ENCODE measurements at regions of chr11 and their contacts with region 1.

Region 1: DNA sequence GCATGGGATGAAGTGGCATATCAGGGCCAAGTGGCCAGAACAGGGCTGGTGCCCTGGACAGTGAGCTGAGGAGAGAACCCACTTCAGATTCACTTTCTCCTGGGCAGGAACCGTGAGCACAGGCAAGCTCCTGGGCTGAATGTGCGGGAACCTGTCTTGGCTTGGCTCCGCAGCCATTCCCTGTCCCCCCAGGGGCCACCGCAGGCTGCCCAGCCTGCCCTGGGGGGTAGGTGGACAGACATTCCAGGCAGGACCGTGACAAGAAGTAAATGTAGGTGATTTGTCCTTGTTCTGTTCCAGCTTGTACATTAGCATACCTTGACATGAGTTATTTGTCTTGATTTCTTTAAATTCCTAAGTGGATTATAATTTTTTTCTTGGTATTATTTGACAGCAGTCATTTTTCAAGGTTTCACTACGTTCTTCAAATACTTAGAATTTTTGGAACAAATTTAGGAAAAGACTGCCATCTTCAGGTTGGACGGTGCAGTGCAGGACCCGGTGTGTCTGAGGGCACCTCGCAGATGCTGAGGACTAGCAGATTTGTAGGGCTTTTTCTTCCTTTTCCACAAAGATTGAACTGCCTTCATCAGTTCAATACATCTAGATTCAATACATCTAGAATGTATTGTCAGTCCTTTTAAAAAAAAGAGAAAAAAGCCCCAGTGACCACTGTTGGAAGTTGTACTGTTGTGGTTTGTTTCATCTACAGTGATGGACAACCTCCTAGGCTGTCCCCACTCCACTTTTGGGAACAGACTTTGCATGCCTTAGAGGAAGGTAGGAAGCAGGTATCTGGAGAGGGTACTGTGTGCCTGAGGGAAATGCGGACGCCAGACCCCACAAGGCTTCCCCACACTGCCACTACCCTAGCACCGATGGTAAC is 115.1 kb upstream of the RASSF10 start:
- DNase-seq: peak; percentile 18 to 34 (median 21)
- H3K4me3 ChIP-seq: no peak overlapping the region
- H3K4me3 Mint-ChIP-seq: no peak overlapping the region
- H3K27ac ChIP-seq: no peak overlapping the region
- H3K27ac Mint-ChIP-seq: no peak overlapping the region
- H3K4me1 ChIP-seq: peaks cover 13 to 15% of the 10 kb centered on the region in 2 donors
- H3K4me1 Mint-ChIP-seq: peaks cover 11% of the 10 kb centered on the region
- H3K27me3 ChIP-seq: peaks cover 0 to 2% of the 10 kb centered on the region in 2 donors
- H3K27me3 Mint-ChIP-seq: peaks cover 6 to 14% (median 7%) of the 10 kb centered on the region in 3 donors
- CTCF ChIP-seq: peak; percentile 79

Region 2: DNA sequence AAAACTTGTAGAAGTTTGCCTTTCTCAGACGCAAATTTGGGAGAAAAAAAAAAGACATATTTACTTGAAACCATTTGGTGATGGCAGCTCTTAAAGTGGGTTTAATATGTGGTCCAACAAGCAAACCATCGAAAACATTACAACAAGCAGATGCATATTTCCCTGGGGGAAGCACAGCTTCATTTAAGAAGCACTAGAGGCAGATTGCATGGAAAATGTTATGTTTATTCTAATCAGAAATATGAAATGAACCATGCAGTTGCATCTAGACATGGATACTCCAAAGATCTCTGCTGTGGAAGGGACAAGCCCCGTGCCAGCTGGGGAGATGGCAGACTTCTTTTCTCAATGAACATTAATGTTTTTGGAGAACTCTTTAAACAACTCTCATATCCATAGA is 574.0 kb before region 1 on chr11:
- intact Hi-C with region 1: loop called in 1 of 2 experiments (anchors 10 kb)
- DNase-seq: no peak
- H3K4me3 ChIP-seq: no peak overlapping the region
- H3K4me3 Mint-ChIP-seq: no peak overlapping the region
- H3K27ac ChIP-seq: no peak overlapping the region
- H3K27ac Mint-ChIP-seq: no peak overlapping the region
- H3K4me1 ChIP-seq: no peaks in the 10 kb centered on the region
- H3K4me1 Mint-ChIP-seq: no peaks in the 10 kb centered on the region
- H3K27me3 ChIP-seq: no peaks in the 10 kb centered on the region
- H3K27me3 Mint-ChIP-seq: peaks cover 0 to 8% (median 6%) of the 10 kb centered on the region in 3 donors
- CTCF ChIP-seq: no peak

Region 3: GRCh38 chr11:12331239-12331874 is 562.7 kb before region 1 on chr11:
- intact Hi-C with region 1: loop called (anchors 10 kb)
- DNase-seq: peak in 2 of 3 donors; percentile 16
- H3K4me3 ChIP-seq: no peak overlapping the region
- H3K4me3 Mint-ChIP-seq: no peak overlapping the region
- H3K27ac ChIP-seq: no peak overlapping the region
- H3K27ac Mint-ChIP-seq: no peak overlapping the region
- H3K4me1 ChIP-seq: no peaks in the 10 kb centered on the region
- H3K4me1 Mint-ChIP-seq: no peaks in the 10 kb centered on the region
- H3K27me3 ChIP-seq: no peaks in the 10 kb centered on the region
- H3K27me3 Mint-ChIP-seq: peaks cover 3 to 13% (median 6%) of the 10 kb centered on the region in 3 donors
- CTCF ChIP-seq: peak; percentile 63

Region 4: DNA sequence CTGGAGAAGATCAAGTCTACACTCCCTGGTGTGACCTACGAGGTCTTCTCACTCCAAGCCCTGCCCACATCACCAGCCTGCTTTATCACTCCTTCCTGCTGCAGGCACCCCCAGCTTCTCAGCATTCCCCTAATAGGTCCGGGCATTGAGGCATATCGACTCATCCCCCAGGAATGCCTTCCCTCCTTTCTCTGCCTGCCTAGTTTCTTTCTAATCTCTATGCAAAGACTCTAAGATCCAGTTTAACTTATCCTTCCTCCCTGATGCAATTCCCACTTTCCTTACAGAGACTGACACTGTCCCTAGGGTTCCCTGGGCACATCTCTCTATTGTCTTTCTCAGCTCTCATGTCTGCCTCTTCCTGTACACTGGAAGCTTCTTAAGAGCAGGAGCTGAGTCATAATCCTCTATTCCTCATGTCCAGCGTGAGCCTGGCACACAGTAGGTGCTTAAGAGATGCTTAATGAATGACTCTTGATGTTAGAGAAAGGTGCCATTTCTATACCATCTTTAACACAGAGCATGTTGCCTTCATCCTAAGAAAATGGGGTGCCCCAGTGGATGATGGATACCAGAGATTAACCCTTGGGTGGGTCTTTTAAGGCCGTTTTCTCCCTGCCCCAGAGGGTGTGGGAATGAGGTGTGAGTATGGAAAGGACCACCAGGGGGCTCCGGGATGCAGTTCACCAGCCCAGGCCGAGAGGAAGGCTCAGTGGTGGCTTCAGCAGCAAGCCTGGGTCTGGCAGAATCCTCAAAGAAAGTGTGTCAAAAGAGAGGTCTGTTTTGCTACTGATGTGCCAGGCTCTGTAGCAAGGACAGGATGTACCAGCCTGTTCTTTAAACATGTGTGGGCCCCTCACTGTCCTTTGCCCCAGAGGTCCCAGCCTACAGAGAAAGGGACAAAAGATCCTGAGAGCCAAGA is 482.0 kb before region 1 on chr11:
- intact Hi-C with region 1: loop called in 1 of 2 experiments (anchors 10 kb)
- DNase-seq: no peak
- H3K4me3 ChIP-seq: no peak overlapping the region
- H3K4me3 Mint-ChIP-seq: no peak overlapping the region
- H3K27ac ChIP-seq: no peak overlapping the region
- H3K27ac Mint-ChIP-seq: no peak overlapping the region
- H3K4me1 ChIP-seq: no peaks in the 10 kb centered on the region
- H3K4me1 Mint-ChIP-seq: no peaks in the 10 kb centered on the region
- H3K27me3 ChIP-seq: no peaks in the 10 kb centered on the region
- H3K27me3 Mint-ChIP-seq: peaks cover 6 to 10% (median 7%) of the 10 kb centered on the region in 3 donors
- CTCF ChIP-seq: peak; percentile 27

Region 5: GRCh38 chr11:12599408-12600143 is 294.5 kb before region 1 on chr11:
- intact Hi-C with region 1: loop called (anchors 2 kb)
- DNase-seq: peak; percentile 6 to 29 (median 13)
- H3K4me3 ChIP-seq: no peak overlapping the region
- H3K4me3 Mint-ChIP-seq: no peak overlapping the region
- H3K27ac ChIP-seq: no peak overlapping the region
- H3K27ac Mint-ChIP-seq: peak overlapping the region in 1 of 7 donors; percentile 50
- H3K4me1 ChIP-seq: no peaks in the 10 kb centered on the region
- H3K4me1 Mint-ChIP-seq: no peaks in the 10 kb centered on the region
- H3K27me3 ChIP-seq: no peaks in the 10 kb centered on the region
- H3K27me3 Mint-ChIP-seq: peaks cover 0 to 17% (median 4%) of the 10 kb centered on the region in 3 donors
- CTCF ChIP-seq: peak; percentile 93

Measured in CD14-positive monocyte (primary cell).